Heart right ventricle (tissue), 16 donors: ENCODE measurements at regions of chr2 and their contacts with region 1.

Region 1: GRCh38 chr2:75676464-75676863 is 29.9 kb downstream of the MRPL19 start:
- DNase-seq: no peak
- ATAC-seq: no peak
- H3K4me3 ChIP-seq: no peak overlapping the region
- H3K27ac ChIP-seq: no peak overlapping the region
- H3K4me1 ChIP-seq: peaks cover 0 to 23% (median 4%) of the 10 kb centered on the region in 9 donors
- H3K27me3 ChIP-seq: no peaks in the 10 kb centered on the region
- CTCF ChIP-seq: no peak

Region 2: GRCh38 chr2:75393379-75393778 is 283.1 kb before region 1 on chr2:
- intact Hi-C with region 1: no loop called
- DNase-seq: no peak
- ATAC-seq: no peak
- H3K4me3 ChIP-seq: no peak overlapping the region
- H3K27ac ChIP-seq: no peak overlapping the region
- H3K4me1 ChIP-seq: no peaks in the 10 kb centered on the region
- H3K27me3 ChIP-seq: peaks cover 0 to 4% (median 0%) of the 10 kb centered on the region in 7 donors
- CTCF ChIP-seq: no peak

Region 3: DNA sequence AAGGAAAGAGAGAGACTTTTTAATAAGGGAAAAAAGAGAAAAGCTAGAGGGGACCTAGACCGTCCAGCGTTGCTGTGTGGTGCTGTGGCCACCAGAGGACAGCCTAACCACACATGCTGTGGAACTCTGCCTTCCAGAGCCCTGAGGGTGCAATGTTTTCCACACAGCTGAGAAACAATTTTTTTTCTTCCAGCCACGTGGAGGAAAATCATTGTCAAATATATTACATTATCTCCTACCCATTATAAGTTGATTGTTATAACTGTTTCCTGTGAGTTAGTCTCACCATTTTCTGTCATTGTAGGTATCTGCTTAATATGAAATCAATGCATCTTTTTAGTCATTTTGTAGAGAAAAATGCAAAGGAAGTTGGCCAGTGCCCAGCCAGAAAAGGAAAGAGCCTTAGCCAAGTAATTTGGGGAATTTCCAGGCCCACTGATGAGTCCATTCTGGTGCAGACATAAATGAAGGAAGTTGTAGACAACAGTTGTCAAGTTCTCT is 35.8 kb before region 1 on chr2:
- intact Hi-C with region 1: loop called in 6 of 10 experiments (anchors 1 to 5 kb)
- DNase-seq: peak; percentile 63 to 68
- ATAC-seq: peak; percentile 92 to 97 (median 96)
- H3K4me3 ChIP-seq: no peak overlapping the region
- H3K27ac ChIP-seq: peak overlapping the region in 5 of 10 donors; percentile 28 to 65 (median 36)
- H3K4me1 ChIP-seq: peaks cover 0 to 19% (median 14%) of the 10 kb centered on the region in 9 donors
- H3K27me3 ChIP-seq: peaks cover 0 to 5% (median 0%) of the 10 kb centered on the region in 7 donors
- CTCF ChIP-seq: peak; percentile 85 to 100 (median 98)